Activated CD4-positive, alpha-beta memory T cell treated with anti-CD3 and anti-CD28 coated beads for 36 hours (primary cell): ENCODE measurements at regions of chr1 and their contacts with region 1.

Region 1: GRCh38 chr1:18913065-18913835 is 10.9 kb upstream of the ALDH4A1 start:
- DNase-seq: peak; percentile 84
- H3K4me3 Mint-ChIP-seq: no peak overlapping the region
- H3K27ac Mint-ChIP-seq: peak overlapping the region; percentile 81
- H3K4me1 Mint-ChIP-seq: peaks cover 17% of the 10 kb centered on the region
- H3K27me3 Mint-ChIP-seq: no peaks in the 10 kb centered on the region

Region 2: DNA sequence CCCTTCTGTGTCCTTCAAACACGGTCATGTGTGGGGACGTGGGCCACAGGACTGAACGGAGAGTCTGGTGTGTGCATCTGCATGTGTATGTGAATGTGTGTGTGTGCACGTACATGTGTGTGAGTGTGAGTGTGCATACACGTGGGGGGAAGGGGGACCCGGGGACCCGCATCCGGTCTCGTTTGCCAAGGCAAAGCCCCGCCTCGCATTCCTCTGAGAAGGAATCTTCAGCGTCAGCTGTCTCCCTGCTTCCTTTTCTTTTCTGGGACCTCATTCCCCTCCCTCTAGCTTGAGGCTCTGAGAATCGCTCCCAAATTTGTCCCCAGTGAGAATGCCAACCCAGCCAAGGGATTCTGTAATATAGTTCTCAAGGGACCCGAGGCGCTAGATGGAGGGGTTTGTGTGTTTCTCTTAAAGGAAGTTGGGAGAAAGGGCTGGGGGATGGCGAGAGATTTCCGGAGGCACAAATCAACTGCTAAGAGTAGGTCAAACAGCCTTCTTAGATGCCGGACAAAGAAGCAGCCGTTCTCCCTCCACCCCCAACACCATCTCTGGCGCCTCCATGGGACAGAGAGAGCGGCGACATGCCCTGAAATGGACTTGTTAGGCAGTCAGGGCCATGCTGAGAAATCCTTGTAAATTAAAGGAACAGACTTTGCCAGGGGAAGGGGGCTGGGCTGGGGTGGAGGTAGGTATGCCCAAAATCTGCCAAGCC is 36.6 kb after region 1 on chr1:
- CTCF ChIA-PET with region 1: interaction called, 60 read pairs
- POLR2A ChIA-PET with region 1: interaction called, 4 read pairs
- intact Hi-C with region 1: no loop called
- DNase-seq: peak; percentile 49
- H3K4me3 Mint-ChIP-seq: peak overlapping the region; percentile 80
- H3K27ac Mint-ChIP-seq: peak overlapping the region; percentile 98
- H3K4me1 Mint-ChIP-seq: peaks cover 90% of the 10 kb centered on the region
- H3K27me3 Mint-ChIP-seq: no peaks in the 10 kb centered on the region

Region 3: DNA sequence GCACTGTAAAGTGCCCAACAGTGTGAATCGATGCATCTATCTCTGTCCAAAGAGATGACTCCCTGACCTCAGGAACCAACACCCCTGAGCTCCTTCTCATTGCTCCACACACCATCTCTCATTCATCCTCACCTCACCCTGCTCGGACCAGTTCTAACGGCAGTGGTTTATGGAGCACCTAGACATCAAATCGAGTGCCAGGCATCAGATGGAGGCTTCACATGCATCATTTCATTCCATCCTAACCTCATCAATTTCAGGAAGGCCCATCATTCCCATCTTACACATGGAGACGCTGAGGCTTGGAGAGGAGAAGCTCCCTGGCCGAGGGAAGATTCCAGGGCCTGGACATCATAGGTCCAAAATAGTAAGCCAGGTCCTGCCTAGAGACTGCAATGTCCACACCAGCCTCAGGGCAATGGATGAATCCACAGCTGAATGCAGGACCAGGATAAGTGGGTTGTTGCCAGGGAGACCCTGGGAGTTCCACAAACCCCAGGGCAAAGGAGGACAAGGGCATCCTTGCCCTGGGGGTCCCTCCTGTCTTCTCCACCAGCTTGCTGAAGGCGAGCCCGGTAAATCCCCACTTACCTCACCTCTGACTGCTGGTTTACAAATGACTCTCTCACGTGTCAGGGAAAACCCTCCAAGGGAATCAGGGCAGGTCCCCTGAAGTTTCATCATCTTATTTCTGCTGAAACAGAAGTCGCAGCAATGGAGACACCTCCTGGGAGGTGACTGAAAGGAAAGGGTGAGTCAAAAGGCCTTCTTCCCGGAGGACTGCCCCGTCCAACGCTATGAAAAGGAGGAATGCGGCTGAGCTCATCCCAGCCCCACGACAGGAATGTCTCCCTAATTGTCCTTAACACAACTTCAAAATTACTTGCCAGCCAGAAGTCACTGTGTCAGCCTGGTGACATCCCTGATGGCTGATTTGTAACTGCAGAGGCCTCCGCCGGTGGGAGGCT is 52.2 kb after region 1 on chr1:
- CTCF ChIA-PET with region 1: interaction called, 35 read pairs
- POLR2A ChIA-PET with region 1: no interaction called
- intact Hi-C with region 1: no loop called
- DNase-seq: peak; percentile 78
- H3K4me3 Mint-ChIP-seq: no peak overlapping the region
- H3K27ac Mint-ChIP-seq: peak overlapping the region; percentile 70
- H3K4me1 Mint-ChIP-seq: peaks cover 14% of the 10 kb centered on the region
- H3K27me3 Mint-ChIP-seq: peaks cover 3% of the 10 kb centered on the region

Region 4: DNA sequence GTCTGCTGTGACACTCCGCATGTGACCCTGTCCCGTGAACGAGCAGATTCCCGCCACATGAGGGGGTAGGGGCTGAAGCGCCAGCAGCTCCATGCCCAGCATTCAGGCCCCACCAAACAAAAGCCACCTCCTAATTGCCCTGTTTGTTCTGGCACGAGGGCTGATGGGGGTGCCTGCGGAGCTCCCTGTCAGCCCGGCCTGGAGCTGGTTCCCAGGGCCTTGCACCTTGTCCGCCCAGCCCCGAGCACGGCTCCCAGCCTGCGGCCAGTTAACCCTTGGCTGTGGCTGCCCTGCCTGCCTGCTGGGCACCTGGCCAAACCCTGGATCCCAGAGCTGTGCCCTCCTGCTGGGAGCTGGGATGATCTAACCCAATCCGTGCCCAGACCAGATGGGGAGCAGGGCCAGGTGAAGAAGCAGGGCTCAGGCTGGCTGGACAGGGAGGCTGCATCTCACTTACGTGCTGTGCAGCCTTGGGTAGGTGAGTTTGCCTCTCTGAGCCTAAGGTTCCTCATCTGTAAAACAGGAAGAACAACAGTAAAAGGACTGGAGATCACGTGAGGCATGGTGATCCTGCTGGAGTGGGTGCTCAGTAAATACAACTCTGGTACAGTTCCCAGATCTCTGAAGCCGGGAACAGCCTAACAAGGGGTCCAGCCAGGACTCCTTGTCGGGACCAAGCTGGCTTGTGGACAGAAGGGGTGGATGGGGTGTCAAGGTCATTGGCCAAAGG is 154.1 kb after region 1 on chr1:
- CTCF ChIA-PET with region 1: interaction called, 144 read pairs
- POLR2A ChIA-PET with region 1: no interaction called
- intact Hi-C with region 1: loop called (anchors 5 kb)
- DNase-seq: no peak
- H3K4me3 Mint-ChIP-seq: no peak overlapping the region
- H3K27ac Mint-ChIP-seq: no peak overlapping the region
- H3K4me1 Mint-ChIP-seq: peaks cover 24% of the 10 kb centered on the region
- H3K27me3 Mint-ChIP-seq: no peaks in the 10 kb centered on the region

Region 5: DNA sequence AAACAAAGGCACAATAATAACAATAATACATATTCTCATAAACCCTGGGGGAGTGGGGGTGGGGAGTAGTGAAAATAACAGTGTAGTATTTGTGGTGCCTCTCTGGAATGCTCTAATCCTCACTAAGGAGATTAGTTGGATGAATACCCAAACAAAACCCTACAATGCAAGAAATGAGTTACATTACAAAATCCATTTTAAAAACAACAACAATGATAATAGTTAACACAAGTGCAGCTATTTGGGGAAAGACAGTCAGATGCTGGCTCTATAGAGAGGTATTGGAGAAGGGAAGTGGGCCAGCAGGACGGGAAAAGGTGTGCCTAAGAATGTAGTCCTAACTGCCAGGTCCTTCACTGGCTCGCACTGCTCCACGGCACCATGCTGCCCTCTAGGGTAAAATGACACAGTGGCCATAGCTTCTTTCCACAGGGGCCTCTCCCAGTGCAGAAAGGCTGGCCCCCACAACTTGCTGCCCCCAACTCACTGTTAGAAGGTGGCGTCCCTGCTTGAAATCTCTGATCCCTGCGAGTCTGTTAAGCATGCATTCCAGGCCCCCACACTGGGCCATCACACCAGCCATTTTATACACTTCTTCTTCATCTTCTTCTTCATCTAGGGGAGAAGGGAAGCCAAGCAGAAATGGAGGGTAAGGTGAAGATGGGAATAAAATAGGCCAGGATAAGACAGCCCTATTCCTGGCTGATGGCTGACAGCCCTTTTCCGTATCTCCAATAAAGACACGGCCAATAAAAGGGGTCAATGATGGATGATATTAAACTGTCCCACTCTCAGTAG is 183.0 kb after region 1 on chr1:
- CTCF ChIA-PET with region 1: interaction called, 14 read pairs
- POLR2A ChIA-PET with region 1: no interaction called
- intact Hi-C with region 1: no loop called
- DNase-seq: peak; percentile 39
- H3K4me3 Mint-ChIP-seq: no peak overlapping the region
- H3K27ac Mint-ChIP-seq: no peak overlapping the region
- H3K4me1 Mint-ChIP-seq: no peaks in the 10 kb centered on the region
- H3K27me3 Mint-ChIP-seq: no peaks in the 10 kb centered on the region